GM23248 (cell line): ENCODE measurements at regions of chr6 and their contacts with region 1.

Region 1: GRCh38 chr6:4941782-4942672 is 61.8 kb downstream of the RPP40 start:
- DNase-seq: peak; percentile 93
- H3K4me3 ChIP-seq: peak overlapping the region; percentile 3; the same call in 1 of the 2 replicates
- H3K27ac ChIP-seq: peak overlapping the region; percentile 68
- H3K4me1 ChIP-seq: peaks cover 31% of the 10 kb centered on the region
- H3K27me3 ChIP-seq: no peaks in the 10 kb centered on the region

Region 2: DNA sequence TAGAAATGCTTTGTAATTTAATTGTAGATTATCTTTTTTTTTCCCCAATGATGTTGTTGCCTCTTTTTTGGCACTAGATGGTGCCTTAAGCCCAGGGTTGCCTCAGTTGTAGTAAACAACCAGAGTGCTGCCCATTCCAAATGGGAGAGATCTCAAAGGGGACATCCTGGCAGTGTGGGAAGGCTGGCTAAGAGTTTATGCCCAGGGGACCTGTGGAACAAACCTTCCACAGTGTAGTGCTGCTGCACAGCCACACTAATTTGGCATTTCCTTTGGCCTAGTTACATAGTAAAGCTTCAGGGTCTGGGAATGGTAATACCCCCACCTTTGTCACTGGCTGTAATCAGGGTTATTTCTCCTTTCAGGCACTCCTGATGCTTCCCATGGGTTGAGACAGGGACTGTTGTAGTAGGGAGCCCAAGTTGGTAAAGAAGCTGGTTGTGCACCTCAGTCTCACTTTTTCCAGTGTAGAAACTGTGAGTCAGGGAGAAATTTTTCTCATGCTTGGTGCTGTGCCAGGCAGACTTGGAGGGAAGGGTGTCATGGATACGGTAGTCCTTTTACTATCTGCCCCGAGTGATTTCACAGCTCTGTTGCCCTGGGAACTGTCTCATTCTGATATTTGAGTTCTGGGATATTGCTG is 628.9 kb before region 1 on chr6:
- in situ Hi-C with region 1: loop called (anchors 25 kb)
- DNase-seq: peak; percentile 98
- H3K4me3 ChIP-seq: peak overlapping the region; percentile 53
- H3K27ac ChIP-seq: peak overlapping the region; percentile 98
- H3K4me1 ChIP-seq: peaks cover 35% of the 10 kb centered on the region
- H3K27me3 ChIP-seq: no peaks in the 10 kb centered on the region

Region 3: GRCh38 chr6:5278047-5278446 is 336.0 kb after region 1 on chr6:
- in situ Hi-C with region 1: no loop called
- DNase-seq: no peak
- H3K4me3 ChIP-seq: no peak overlapping the region
- H3K27ac ChIP-seq: no peak overlapping the region
- H3K4me1 ChIP-seq: no peaks in the 10 kb centered on the region
- H3K27me3 ChIP-seq: no peaks in the 10 kb centered on the region